Activated naive CD8-positive, alpha-beta T cell treated with anti-CD3 and anti-CD28 coated beads, Interleukin-2, amount 10 ng/mL, durations not matched to agents 7 days and 5 days (primary cell): ENCODE measurements at regions of chr4 and their contacts with region 1.

Region 1: DNA sequence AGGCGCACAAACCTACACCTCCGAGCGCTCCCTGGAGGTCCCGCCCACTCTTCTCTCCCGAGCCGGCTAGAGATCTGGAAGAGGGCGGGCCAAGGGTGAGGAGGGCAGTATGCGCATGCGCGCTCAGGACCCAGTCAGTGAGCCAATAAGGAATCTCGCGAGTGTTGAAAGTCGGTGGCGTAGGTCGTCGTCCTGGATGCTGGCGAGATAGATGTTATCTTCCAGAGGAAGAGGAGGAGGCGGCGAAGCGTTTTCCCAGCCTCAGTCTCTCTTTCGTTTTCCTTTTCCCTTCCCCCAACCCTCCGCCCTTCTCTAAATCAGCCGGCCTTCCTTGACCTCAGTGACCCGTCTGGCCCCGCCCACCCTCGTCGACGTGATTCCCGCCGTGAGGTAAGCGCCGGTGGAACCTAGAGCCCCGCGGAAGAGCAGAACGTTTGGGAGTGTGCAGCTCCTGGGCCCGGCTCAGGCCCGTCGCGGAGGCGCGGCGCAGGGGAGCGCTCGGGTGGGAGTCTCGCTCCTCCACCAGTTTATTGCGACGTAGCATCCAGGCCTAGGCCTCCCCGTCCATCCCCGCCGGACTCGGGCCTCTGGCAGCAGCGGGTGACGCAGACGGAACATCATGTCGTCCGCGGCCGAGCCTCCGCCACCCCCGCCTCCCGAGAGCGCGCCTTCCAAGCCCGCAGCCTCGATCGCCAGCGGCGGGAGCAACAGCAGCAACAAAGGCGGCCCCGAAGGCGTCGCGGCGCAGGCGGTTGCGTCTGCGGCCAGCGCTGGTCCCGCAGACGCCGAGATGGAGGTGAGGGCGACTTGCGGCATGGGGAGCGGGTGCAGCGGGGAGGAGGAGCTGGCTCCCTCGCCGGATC is at the start of gene SMARCA5:
- DNase-seq: peak; percentile 94
- ATAC-seq: peak; percentile 86
- H3K4me3 Mint-ChIP-seq: peak within 1 kb of the TSS; percentile 96
- H3K27ac Mint-ChIP-seq: peak within 1 kb of the TSS; percentile 99
- H3K4me1 Mint-ChIP-seq: peaks cover 20% of the 10 kb centered on the region
- H3K27me3 Mint-ChIP-seq: peaks cover 9% of the 10 kb centered on the region
- total RNA-seq, gene SMARCA5: 52.4 to 52.7 TPM

Region 2: DNA sequence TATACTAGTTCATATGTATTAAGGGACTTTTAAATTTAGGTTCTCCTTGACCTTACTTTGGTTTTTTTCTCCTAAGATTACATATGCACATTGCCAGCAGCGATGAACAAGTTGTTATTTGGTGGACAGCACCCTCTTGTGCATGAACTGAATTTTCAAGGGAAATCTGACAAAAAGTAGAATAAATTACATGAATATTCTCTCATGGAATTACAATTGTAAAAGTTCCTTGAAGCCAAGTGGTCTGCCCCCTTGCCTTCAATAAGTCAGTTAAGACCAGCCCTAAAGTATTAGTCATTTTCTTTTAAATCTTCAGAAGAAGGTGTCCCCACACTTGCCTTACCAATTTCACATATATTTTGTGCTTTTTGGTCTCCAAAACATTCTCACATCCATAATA is 30.7 kb before region 1 on chr4:
- POLR2A ChIA-PET with region 1: no interaction called
- DNase-seq: no peak
- ATAC-seq: no peak
- H3K4me3 Mint-ChIP-seq: no peak overlapping the region
- H3K27ac Mint-ChIP-seq: no peak overlapping the region
- H3K4me1 Mint-ChIP-seq: no peaks in the 10 kb centered on the region
- H3K27me3 Mint-ChIP-seq: peaks cover 16% of the 10 kb centered on the region

Region 3: GRCh38 chr4:143558823-143559756 is 45.6 kb after region 1 on chr4:
- POLR2A ChIA-PET with region 1: interaction called, 10 read pairs
- DNase-seq: peak; percentile 75
- ATAC-seq: peak; percentile 88
- H3K4me3 Mint-ChIP-seq: peak overlapping the region; percentile 85
- H3K27ac Mint-ChIP-seq: peak overlapping the region; percentile 90
- H3K4me1 Mint-ChIP-seq: peaks cover 36% of the 10 kb centered on the region
- H3K27me3 Mint-ChIP-seq: no peaks in the 10 kb centered on the region